Sigmoid colon (tissue), 7 donors: ENCODE measurements at regions of chr1 and their contacts with region 1.

Region 1: GRCh38 chr1:234683861-234684632 is 74.1 kb upstream of the IRF2BP2 start:
- DNase-seq: peak; percentile 91
- H3K4me3 ChIP-seq: no peak overlapping the region
- H3K27ac ChIP-seq: peak overlapping the region; percentile 65 to 79 (median 78)
- H3K4me1 ChIP-seq: peaks cover 0 to 17% (median 11%) of the 10 kb centered on the region in 4 donors
- H3K27me3 ChIP-seq: no peaks in the 10 kb centered on the region
- CTCF ChIP-seq: no peak
- EP300 ChIP-seq: peak in 1 of 4 donors; percentile 28
- POLR2A ChIP-seq: no peak

Region 2: GRCh38 chr1:234716908-234717375 is 32.9 kb after region 1 on chr1:
- intact Hi-C with region 1: loop called (anchors 2 kb)
- DNase-seq: peak; percentile 84
- H3K4me3 ChIP-seq: peak overlapping the region in 1 of 4 donors; percentile 4
- H3K27ac ChIP-seq: peak overlapping the region; percentile 94 to 97 (median 96)
- H3K4me1 ChIP-seq: peaks cover 2 to 68% (median 65%) of the 10 kb centered on the region in 4 donors
- H3K27me3 ChIP-seq: no peaks in the 10 kb centered on the region
- CTCF ChIP-seq: no peak
- EP300 ChIP-seq: peak; percentile 29 to 82 (median 50)
- POLR2A ChIP-seq: peak; percentile 9 to 25

Region 3: GRCh38 chr1:234730770-234731568 is 46.9 kb after region 1 on chr1:
- intact Hi-C with region 1: no loop called
- DNase-seq: peak; percentile 19
- H3K4me3 ChIP-seq: no peak overlapping the region
- H3K27ac ChIP-seq: peak overlapping the region in 1 of 4 donors; percentile 7
- H3K4me1 ChIP-seq: peaks cover 0 to 26% (median 22%) of the 10 kb centered on the region in 4 donors
- H3K27me3 ChIP-seq: no peaks in the 10 kb centered on the region
- CTCF ChIP-seq: no peak
- EP300 ChIP-seq: no peak
- POLR2A ChIP-seq: no peak